Activated T-helper 1 cell treated with anti-CD3 and anti-CD28 coated beads, Interleukin-12 subunit alpha, Interleukin-12 subunit beta, Interleukin-2, Interleukin-4 antibody, amounts not matched to agents 30 ng/mL and 10 ng/mL and 1 ng/mL, durations not matched to agents 14 hours and 24 hours and 36 hours (primary cell): ENCODE measurements at regions of chr2 and their contacts with region 1.

Region 1: DNA sequence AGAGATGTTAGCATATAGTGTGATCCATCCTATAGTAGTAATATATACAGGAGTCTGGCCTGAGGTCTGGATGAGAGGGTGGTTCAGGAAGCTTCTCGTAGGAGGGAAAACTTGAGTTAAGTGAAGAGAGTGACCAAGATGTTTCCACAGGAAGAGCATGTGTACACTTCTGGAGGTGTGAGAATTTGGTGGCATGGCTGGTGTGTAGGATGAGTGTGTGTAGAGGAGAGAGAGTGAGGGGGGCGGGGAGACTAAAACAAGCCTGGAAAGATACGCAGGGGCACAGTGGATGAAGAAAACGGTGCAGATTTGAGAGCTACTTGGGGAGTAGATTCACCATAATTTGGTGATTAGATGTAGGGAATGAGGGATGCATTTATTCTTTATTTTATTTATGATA is 43.5 kb upstream of the CTLA4 start:
- DNase-seq: no peak
- H3K4me3 Mint-ChIP-seq: no peak overlapping the region
- H3K27ac Mint-ChIP-seq: peak overlapping the region; percentile 79
- H3K4me1 Mint-ChIP-seq: peaks cover 48% of the 10 kb centered on the region
- H3K27me3 Mint-ChIP-seq: no peaks in the 10 kb centered on the region

Region 2: DNA sequence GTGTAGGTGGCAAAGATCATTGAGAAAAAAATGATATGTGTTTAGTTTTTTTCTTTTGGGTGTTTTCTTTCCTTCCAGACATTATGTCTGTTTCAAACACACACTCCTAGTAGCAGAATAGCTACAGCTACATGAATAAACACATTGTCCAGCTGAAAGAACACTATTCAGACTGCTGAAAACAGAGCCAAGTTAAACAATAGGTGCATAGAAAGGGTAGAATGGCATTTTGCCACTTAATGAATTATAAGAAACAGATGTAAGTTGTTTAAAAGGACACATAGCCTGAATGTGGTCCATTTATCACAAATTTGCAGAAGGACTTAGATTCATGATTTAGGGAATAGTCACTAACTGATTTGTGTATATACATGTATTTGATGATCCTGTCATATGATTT is 63.6 kb after region 1 on chr2:
- intact Hi-C with region 1: loop called (anchors 1 kb)
- DNase-seq: no peak
- H3K4me3 Mint-ChIP-seq: no peak overlapping the region
- H3K27ac Mint-ChIP-seq: peak overlapping the region; percentile 27
- H3K4me1 Mint-ChIP-seq: peaks cover 74% of the 10 kb centered on the region
- H3K27me3 Mint-ChIP-seq: no peaks in the 10 kb centered on the region